MCF 10A (cell line): ENCODE measurements at regions of chr18 and their contacts with region 1.

Region 1: GRCh38 chr18:32899819-32900218 is 127.0 kb upstream of the KLHL14 start:
- DNase-seq: peak; percentile 25
- H3K4me3 Mint-ChIP-seq: no peak overlapping the region
- H3K27ac Mint-ChIP-seq: no peak overlapping the region
- H3K4me1 Mint-ChIP-seq: no peaks in the 10 kb centered on the region
- H3K27me3 Mint-ChIP-seq: no peaks in the 10 kb centered on the region
- CTCF ChIP-seq: peak; percentile 36

Region 2: DNA sequence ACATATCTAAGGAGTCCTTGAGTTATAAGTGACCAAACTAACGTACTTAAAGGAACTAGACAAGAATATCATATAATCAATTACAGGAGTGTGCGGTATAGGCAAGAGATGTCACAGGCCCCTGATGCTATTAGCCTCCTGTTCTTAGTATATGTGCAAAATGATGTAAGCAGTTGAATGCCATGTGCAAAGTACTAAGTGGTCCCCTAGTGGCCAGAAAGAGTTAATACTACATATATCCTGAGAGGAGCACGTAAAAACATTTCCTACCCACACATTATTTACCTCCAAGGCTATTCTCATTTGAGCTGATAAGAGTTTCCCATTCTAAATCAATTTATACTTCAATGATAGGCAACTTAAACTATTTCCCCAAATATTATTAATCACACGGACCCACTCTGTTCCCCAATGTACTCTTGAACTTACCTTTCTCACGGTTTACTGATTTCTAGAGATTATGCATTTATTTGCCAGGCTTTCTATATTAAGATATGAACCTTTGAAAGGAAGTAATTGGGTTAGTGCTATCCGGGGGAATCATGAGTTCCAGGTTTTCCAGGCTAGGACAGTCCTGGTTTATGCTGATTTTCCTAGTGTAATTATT is 31.0 kb after region 1 on chr18:
- CTCF ChIA-PET with region 1: interaction called, 5 read pairs
- POLR2A ChIA-PET with region 1: no interaction called
- intact Hi-C with region 1: loop called (anchors 1 kb)
- DNase-seq: peak; percentile 39
- H3K4me3 Mint-ChIP-seq: no peak overlapping the region
- H3K27ac Mint-ChIP-seq: no peak overlapping the region
- H3K4me1 Mint-ChIP-seq: peaks cover 5% of the 10 kb centered on the region
- H3K27me3 Mint-ChIP-seq: peaks cover 17% of the 10 kb centered on the region
- CTCF ChIP-seq: peak; percentile 61